ENCODE measurements at regions of chrX and their contacts with region 1.

Region 1: DNA sequence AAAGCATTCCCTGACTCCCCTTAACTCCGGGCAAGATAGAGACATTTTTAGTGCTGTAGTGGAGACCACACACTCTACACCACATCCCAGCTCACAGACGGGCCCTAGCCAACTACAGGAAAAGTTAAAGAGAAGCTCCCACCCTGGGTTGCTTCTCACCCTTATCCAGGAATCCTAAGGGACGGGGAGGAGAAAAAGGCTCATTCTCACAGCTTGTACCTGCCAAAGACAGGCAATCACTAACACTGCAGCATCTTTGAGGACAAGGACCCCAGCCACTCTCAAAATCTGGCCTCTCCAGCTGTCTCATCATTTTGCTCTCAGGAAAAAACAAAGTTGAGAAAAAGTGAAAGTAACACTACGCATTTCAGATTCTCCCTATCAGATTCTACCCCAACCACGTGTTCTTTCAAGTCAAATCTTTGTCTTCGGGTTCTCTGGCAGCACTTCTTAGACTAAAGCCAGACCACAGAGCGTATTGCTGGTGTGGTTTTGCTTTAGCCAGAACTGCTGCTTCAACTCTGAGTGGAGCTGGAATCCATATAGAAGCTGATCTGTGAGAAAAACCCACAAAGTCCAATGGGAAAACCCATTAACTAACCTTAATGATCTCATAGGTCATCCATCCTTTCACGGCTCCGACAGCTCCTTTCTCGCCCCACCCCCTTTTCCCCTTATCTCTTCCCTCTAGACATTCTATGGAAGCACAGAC is 605.9 kb upstream of the DIPK2B start:
- DNase-seq: peak; percentile 66
- H3K4me3 Mint-ChIP-seq: peak overlapping the region; percentile 55
- H3K27ac Mint-ChIP-seq: peak overlapping the region; percentile 94
- H3K4me1 Mint-ChIP-seq: peaks cover 86% of the 10 kb centered on the region
- H3K27me3 Mint-ChIP-seq: no peaks in the 10 kb centered on the region

Region 2: GRCh38 chrX:45295259-45295986 is 511.1 kb before region 1 on chrX:
- CTCF ChIA-PET with region 1: no interaction called
- intact Hi-C with region 1: no loop called
- DNase-seq: no peak
- H3K4me3 Mint-ChIP-seq: no peak overlapping the region
- H3K27ac Mint-ChIP-seq: no peak overlapping the region
- H3K4me1 Mint-ChIP-seq: no peaks in the 10 kb centered on the region
- H3K27me3 Mint-ChIP-seq: no peaks in the 10 kb centered on the region

Region 3: DNA sequence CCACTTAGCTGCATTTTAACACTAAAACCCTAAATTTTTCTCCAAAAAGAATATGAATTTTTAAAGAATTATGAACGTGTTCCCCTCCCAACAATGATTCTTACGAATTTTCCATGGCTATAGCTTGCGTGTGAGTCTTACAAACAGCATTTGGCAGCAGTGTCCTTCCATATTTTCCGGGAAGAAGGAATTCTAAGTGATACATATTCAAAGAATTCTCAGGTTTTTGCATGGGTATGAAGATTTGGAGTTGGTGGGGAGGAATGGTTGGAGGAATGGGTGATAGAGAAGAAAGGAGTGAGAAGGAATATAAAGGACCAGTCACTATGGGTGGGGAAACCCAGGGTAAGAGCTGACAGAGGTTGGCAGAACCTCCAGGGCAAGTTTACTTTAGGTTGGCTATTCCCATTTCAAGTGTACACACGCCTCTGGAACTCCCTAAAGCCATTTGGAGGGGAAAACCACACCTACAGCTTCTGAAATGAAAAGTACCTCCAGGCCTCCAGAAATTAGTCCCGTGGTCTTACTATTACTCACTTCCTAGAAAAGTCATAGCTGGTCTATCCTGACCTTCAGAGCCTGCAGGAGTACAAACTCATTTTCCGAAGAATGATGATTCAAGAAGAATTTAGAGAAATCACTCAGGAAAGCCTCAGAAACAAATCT is 185.1 kb before region 1 on chrX:
- CTCF ChIA-PET with region 1: no interaction called
- intact Hi-C with region 1: loop called (anchors 1 kb)
- DNase-seq: peak; percentile 42
- H3K4me3 Mint-ChIP-seq: no peak overlapping the region
- H3K27ac Mint-ChIP-seq: peak overlapping the region; percentile 36
- H3K4me1 Mint-ChIP-seq: peaks cover 21% of the 10 kb centered on the region
- H3K27me3 Mint-ChIP-seq: peaks cover 6% of the 10 kb centered on the region

Region 4: DNA sequence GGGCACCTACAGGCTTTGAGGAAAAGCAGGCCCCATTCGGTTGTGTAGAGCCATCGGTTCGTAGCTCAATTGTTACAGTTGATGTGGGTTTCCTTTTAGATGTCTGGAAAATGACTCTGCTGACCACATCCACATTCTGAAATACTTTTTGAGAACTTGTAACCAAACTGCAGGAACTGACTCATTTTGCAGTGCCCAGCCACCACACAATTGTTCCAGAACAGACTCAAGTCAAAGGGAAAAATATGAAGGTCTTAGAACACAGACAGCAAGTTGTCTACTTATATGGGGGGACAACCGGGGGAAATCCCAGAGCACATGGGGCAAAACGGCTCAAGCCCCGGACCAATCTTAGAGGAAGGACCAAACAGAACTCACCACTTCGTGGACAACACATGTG is 48.2 kb before region 1 on chrX:
- CTCF ChIA-PET with region 1: interaction called, 5 read pairs
- intact Hi-C with region 1: loop called (anchors 1 kb)
- DNase-seq: peak; percentile 70
- H3K4me3 Mint-ChIP-seq: peak overlapping the region; percentile 62
- H3K27ac Mint-ChIP-seq: peak overlapping the region; percentile 86
- H3K4me1 Mint-ChIP-seq: peaks cover 71% of the 10 kb centered on the region
- H3K27me3 Mint-ChIP-seq: no peaks in the 10 kb centered on the region

Region 5: GRCh38 chrX:45818913-45819312 is 12.3 kb after region 1 on chrX:
- CTCF ChIA-PET with region 1: interaction called, 5 read pairs
- intact Hi-C with region 1: loop called (anchors 1 kb)
- DNase-seq: no peak
- H3K4me3 Mint-ChIP-seq: no peak overlapping the region
- H3K27ac Mint-ChIP-seq: peak overlapping the region; percentile 91
- H3K4me1 Mint-ChIP-seq: peaks cover 57% of the 10 kb centered on the region
- H3K27me3 Mint-ChIP-seq: no peaks in the 10 kb centered on the region

Region 6: GRCh38 chrX:45830343-45830742 is 23.8 kb after region 1 on chrX:
- CTCF ChIA-PET with region 1: interaction called, 3 read pairs
- intact Hi-C with region 1: loop called (anchors 1 kb)
- DNase-seq: no peak
- H3K4me3 Mint-ChIP-seq: peak overlapping the region; percentile 27
- H3K27ac Mint-ChIP-seq: peak overlapping the region; percentile 93
- H3K4me1 Mint-ChIP-seq: peaks cover 59% of the 10 kb centered on the region
- H3K27me3 Mint-ChIP-seq: no peaks in the 10 kb centered on the region

Region 7: DNA sequence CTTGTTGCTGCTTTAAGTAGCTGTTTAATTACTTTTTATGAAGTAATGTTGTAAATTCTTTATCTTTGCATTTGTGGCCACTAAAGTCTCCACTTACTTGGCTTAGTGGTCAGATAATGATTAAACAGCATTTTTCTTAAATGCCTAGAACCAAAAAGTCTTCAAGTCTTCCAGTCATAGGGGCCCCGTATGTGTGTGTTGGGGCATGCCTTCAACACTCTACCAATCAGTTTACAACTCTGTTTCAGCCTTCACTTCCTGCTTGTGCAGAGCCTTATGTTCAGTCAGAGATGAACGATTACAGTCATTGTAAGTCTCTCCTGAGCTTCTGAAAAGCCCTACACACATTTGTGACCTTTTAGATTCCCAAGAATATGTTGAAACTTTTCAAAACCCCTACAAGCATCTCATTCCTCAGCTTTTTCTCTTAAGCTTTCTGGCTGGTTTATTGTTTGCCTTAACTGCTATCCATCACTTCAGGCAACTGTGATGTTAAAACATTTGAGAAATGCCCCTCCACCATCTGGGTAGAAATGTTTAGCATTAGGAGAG is 147.4 kb after region 1 on chrX:
- CTCF ChIA-PET with region 1: no interaction called
- intact Hi-C with region 1: no loop called
- DNase-seq: no peak
- H3K4me3 Mint-ChIP-seq: no peak overlapping the region
- H3K27ac Mint-ChIP-seq: no peak overlapping the region
- H3K4me1 Mint-ChIP-seq: peaks cover 1% of the 10 kb centered on the region
- H3K27me3 Mint-ChIP-seq: no peaks in the 10 kb centered on the region

Measured in activated naive CD4-positive, alpha-beta T cell treated with anti-CD3 and anti-CD28 coated beads for 36 hours (primary cell).